Tibial artery (tissue), 4 donors: ENCODE measurements at regions of chr12 and their contacts with region 1.

Region 1: GRCh38 chr12:45575823-45576475 is 153.6 kb upstream of the ARID2 start:
- DNase-seq: no peak
- H3K4me3 ChIP-seq: no peak overlapping the region
- H3K27ac ChIP-seq: no peak overlapping the region
- H3K4me1 ChIP-seq: no peaks in the 10 kb centered on the region
- H3K27me3 ChIP-seq: no peaks in the 10 kb centered on the region
- CTCF ChIP-seq: no peak

Region 2: DNA sequence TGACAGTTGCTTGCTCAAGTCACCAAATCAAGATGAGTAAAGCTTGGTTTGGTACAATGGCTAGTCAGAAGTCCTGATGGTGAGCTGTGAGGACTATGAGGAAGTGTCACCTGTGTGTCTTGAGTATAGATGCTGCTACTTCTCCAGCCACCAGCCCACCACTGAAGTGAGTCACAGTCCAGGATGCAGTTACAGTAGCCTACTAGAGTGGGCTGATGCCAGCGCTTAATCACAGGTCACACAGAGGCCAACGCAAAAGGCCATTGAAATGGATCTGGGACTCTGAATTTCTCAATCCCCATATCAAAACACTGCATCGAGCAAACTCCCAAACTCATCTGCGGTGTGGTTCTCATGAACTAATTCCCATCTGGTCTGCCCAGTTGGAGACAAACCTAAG is 136.9 kb before region 1 on chr12:
- intact Hi-C with region 1: no loop called
- DNase-seq: no peak
- H3K4me3 ChIP-seq: no peak overlapping the region
- H3K27ac ChIP-seq: no peak overlapping the region
- H3K4me1 ChIP-seq: no peaks in the 10 kb centered on the region
- H3K27me3 ChIP-seq: no peaks in the 10 kb centered on the region
- CTCF ChIP-seq: no peak

Region 3: DNA sequence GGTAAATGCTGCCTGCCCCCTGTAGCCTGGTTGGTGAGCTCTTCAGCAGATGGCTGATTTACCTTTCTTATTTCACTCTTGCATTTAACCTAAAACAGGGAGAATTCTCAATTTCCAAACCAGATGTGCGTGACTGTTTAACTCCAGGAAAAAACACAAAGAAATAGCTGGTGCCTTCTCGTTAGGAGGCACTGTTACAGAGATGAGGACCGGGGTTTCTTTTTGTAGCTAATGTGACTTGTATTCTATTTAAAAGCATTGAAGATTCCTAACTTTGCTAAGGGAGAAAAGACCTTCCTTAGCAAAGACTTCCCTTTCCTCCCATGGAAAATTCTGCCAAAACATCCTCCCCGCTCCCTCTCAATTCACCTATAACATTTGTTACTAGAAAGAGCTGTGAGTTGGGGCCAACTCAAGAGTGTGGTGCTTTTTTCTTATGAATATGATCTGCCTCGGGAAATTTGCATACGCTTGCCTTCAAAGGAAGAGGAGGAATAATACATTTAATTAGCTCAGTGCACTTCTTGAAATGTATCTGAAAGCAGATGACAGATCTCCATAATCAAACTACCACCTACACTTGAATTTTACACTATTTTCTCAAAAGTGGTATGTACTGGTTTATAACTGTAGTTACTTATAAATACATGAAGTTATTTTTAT is 51.6 kb after region 1 on chr12:
- intact Hi-C with region 1: loop called (anchors 2 kb)
- DNase-seq: no peak
- H3K4me3 ChIP-seq: no peak overlapping the region
- H3K27ac ChIP-seq: no peak overlapping the region
- H3K4me1 ChIP-seq: no peaks in the 10 kb centered on the region
- H3K27me3 ChIP-seq: no peaks in the 10 kb centered on the region
- CTCF ChIP-seq: no peak